ENCODE measurements at regions of chr17 and their contacts with region 1.

Region 1: DNA sequence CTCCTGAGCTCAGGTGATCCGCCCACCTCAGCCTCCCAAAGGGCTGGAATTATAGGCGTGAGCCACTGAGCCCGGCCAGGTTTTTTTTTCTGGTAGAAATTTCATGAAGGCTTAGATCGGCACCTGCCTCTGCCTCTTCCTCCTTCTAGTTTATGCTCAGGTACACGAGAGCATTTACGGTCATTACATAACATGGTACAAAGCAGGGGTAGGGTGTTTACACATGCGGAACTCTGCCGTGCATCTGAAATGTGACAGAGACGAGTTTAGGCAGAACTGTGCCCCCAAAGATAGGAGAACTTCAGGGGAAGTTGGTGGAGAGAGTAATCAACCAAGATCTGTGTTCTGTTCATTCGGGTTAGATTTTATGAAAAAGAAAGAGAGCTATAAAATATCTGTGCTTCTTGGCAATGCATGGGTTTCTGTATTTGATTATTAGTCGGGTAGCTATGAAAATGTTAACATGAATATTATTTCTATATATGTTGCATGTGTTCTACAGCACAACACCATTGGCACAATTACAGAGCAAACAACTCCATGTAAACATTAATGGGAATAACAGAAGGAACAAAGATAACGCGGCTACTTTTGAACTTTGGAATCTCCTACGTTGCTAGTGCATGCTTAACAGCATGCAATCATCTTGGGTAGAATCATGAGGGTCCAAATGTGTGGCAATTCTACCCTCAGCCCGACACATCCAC is 23.5 kb upstream of the MAP2K6 start:
- DNase-seq: no peak
- ATAC-seq: no peak
- H3K4me3 ChIP-seq: no peak overlapping the region
- H3K27ac ChIP-seq: no peak overlapping the region
- H3K4me1 ChIP-seq: no peaks in the 10 kb centered on the region; the same call in 1 of the 2 replicates
- H3K27me3 ChIP-seq: no peaks in the 10 kb centered on the region
- CTCF ChIP-seq: no peak

Region 2: GRCh38 chr17:68368387-68368786 is 1022.6 kb before region 1 on chr17:
- CTCF ChIA-PET with region 1: interaction called, 14 read pairs
- POLR2A ChIA-PET with region 1: no interaction called
- in situ Hi-C with region 1: no loop called
- intact Hi-C with region 1: no loop called
- DNase-seq: no peak
- ATAC-seq: no peak
- H3K4me3 ChIP-seq: no peak overlapping the region
- H3K27ac ChIP-seq: no peak overlapping the region
- H3K4me1 ChIP-seq: no peaks in the 10 kb centered on the region
- H3K27me3 ChIP-seq: no peaks in the 10 kb centered on the region
- CTCF ChIP-seq: no peak

Region 3: DNA sequence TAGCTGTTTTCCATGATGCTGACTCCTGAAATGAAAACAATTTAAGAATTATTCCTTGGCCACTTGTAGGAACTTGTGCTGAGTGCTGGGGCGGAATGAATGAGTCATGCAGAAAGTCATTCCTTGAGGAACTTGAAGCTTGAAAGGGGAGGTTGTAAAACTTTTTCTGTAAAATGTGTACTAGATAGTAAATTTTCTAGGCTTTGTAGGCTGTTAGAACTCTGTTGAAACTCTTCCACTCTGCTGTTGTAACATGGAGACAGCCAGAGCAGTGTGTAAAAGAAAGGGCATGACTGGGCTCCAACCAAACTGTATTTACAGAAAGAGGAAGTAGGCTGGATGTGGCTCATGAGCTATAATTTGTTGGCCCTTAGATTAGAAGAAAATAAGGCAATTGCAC is 481.9 kb before region 1 on chr17:
- CTCF ChIA-PET with region 1: interaction called, 13 read pairs
- POLR2A ChIA-PET with region 1: no interaction called
- in situ Hi-C with region 1: no loop called
- intact Hi-C with region 1: no loop called
- DNase-seq: no peak
- ATAC-seq: no peak
- H3K4me3 ChIP-seq: no peak overlapping the region
- H3K27ac ChIP-seq: no peak overlapping the region
- H3K4me1 ChIP-seq: no peaks in the 10 kb centered on the region
- H3K27me3 ChIP-seq: no peaks in the 10 kb centered on the region
- CTCF ChIP-seq: no peak

Region 4: GRCh38 chr17:69050999-69051775 is 339.8 kb before region 1 on chr17:
- CTCF ChIA-PET with region 1: no interaction called
- POLR2A ChIA-PET with region 1: no interaction called
- in situ Hi-C with region 1: no loop called
- intact Hi-C with region 1: no loop called
- DNase-seq: no peak
- ATAC-seq: no peak
- H3K4me3 ChIP-seq: no peak overlapping the region
- H3K27ac ChIP-seq: no peak overlapping the region
- H3K4me1 ChIP-seq: no peaks in the 10 kb centered on the region
- H3K27me3 ChIP-seq: no peaks in the 10 kb centered on the region
- CTCF ChIP-seq: no peak

Measured in Panc1 (cell line).